CD4-positive, alpha-beta memory T cell (primary cell): ENCODE measurements at regions of chr10 and their contacts with region 1.

Region 1: DNA sequence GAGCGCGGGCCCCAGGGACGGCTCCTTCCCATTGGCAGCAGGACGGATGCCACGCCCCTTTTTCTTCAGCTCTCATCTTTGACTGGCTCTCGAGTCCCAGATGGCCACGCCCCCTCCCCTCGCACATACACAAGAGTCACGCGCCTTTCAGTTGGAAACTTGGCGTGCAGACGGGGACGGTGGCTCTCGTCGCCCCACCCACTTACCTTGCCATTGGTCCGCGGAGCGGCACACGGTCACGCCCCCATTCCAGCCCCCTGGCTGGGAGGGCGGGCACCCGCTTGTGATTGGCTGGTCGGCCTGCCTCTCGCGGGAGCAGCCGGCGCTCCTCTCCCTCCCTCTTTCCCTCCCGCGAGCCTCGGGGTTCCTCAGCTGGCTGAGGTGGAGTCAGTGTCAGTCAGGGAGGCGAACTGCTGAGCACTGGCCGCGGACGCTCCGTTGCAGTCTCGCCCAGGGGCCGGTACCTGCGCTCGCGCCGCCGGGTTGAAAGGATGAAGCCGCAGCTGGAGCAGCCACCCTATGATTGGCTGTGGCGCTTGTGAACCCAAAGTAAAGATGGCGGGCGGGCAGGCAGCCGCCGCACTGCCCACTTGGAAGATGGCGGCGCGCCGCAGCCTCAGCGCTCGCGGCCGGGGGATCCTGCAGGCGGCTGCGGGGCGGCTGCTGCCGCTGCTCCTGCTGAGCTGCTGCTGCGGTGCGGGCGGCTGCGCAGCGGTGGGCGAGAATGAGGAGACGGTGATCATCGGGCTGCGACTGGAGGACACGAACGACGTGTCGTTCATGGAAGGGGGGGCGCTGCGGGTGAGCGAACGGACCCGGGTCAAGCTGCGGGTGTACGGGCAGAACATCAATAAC is at the start of gene CNNM2:
- DNase-seq: peak; percentile 100
- H3K4me3 ChIP-seq: peak within 1 kb of the TSS; percentile 84 to 91
- H3K4me3 Mint-ChIP-seq: peak within 1 kb of the TSS; percentile 94 to 96 (median 95)
- H3K27ac ChIP-seq: peak within 1 kb of the TSS; percentile 72
- H3K27ac Mint-ChIP-seq: peak within 1 kb of the TSS; percentile 92 to 98 (median 96)
- H3K4me1 ChIP-seq: peaks cover 53% of the 10 kb centered on the region
- H3K4me1 Mint-ChIP-seq: peaks cover 35 to 59% (median 51%) of the 10 kb centered on the region in 4 donors
- H3K27me3 ChIP-seq: no peaks in the 10 kb centered on the region
- H3K27me3 Mint-ChIP-seq: peaks cover 4 to 6% of the 10 kb centered on the region in 2 donors
- total RNA-seq, gene CNNM2: 11.9 to 14.4 TPM

Region 2: DNA sequence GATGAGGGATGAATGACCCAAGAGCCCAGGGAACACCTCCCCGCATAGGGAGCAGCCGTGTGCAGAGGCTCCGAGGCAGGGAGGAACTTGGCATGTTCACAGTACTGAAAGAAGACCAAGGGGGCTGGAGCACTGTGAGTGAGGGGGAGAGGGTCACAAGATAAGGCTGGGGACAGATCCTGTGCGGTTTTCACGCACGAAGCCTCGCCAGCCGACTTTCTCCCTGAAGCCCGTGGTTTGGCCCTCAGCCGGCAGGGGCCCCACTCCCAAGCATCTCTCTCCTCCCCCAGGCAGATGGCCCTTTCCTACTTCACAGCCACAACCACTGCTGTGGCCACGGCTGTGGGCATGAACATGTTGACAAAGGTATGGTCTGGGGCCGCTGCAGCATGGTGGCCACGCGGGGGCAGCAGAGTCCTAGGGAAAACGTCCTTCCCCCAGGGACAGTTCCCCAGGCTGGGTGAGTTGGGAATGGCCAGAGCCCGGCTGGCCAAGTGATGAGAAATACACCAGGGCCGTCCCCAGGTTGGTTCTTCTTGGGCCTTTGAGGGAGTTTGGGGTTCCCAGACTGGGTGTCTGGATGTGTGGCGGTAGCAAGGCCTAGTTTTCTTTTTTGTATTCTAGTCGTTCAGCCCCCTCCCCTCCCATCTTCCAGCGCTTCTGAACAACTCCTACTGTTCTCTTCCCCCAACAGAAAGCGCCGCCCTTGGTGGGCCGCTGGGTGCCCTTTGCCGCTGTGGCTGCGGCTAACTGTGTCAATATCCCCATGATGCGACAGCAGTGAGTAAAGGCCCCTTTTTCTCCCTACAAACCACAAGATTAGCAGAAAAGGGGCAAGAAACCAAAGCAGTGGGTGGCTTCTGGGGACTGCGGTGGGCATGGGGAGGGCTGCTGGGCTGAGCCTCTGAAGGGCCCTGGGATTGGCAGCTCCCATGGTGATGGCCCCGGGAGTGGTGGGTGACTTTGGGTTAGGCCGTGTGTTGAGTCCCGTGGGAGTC is 188.9 kb before region 1 on chr10:
- CTCF ChIA-PET with region 1: no interaction called
- POLR2A ChIA-PET with region 1: no interaction called
- intact Hi-C with region 1: loop called (anchors 2 kb)
- DNase-seq: peak in 2 of 5 donors; percentile 16 to 26
- H3K4me3 ChIP-seq: no peak overlapping the region
- H3K4me3 Mint-ChIP-seq: no peak overlapping the region
- H3K27ac ChIP-seq: no peak overlapping the region
- H3K27ac Mint-ChIP-seq: peak overlapping the region in 1 of 7 donors; percentile 15
- H3K4me1 ChIP-seq: no peaks in the 10 kb centered on the region
- H3K4me1 Mint-ChIP-seq: peaks cover 0 to 4% (median 4%) of the 10 kb centered on the region in 4 donors
- H3K27me3 ChIP-seq: no peaks in the 10 kb centered on the region
- H3K27me3 Mint-ChIP-seq: no peaks in the 10 kb centered on the region

Region 3: GRCh38 chr10:102853944-102854694 is 64.1 kb before region 1 on chr10 and contains the start of gene BORCS7:
- CTCF ChIA-PET with region 1: interaction called, 3 read pairs
- POLR2A ChIA-PET with region 1: interaction called, 10 read pairs
- intact Hi-C with region 1: loop called (anchors 1 kb)
- DNase-seq: peak; percentile 87 to 93 (median 89)
- H3K4me3 ChIP-seq: peak within 1 kb of the TSS; percentile 63 to 91
- H3K4me3 Mint-ChIP-seq: peak within 1 kb of the TSS; percentile 77 to 99 (median 94)
- H3K27ac ChIP-seq: peak within 1 kb of the TSS; percentile 89
- H3K27ac Mint-ChIP-seq: peak within 1 kb of the TSS; percentile 92 to 100 (median 99)
- H3K4me1 ChIP-seq: peaks cover 4% of the 10 kb centered on the region
- H3K4me1 Mint-ChIP-seq: peaks cover 8 to 24% (median 14%) of the 10 kb centered on the region in 4 donors
- H3K27me3 ChIP-seq: no peaks in the 10 kb centered on the region
- H3K27me3 Mint-ChIP-seq: no peaks in the 10 kb centered on the region
- total RNA-seq, gene BORCS7: 14.7 to 17.7 TPM

Region 4: GRCh38 chr10:103192451-103193106 is 274.4 kb after region 1 on chr10:
- CTCF ChIA-PET with region 1: interaction called, 3 read pairs
- POLR2A ChIA-PET with region 1: interaction called, 14 read pairs
- intact Hi-C with region 1: loop called (anchors 1 kb)
- DNase-seq: peak; percentile 48 to 68 (median 56)
- H3K4me3 ChIP-seq: peak overlapping the region; percentile 80 to 81
- H3K4me3 Mint-ChIP-seq: peak overlapping the region; percentile 94 to 99 (median 98)
- H3K27ac ChIP-seq: peak overlapping the region; percentile 76
- H3K27ac Mint-ChIP-seq: peak overlapping the region; percentile 94 to 98 (median 97)
- H3K4me1 ChIP-seq: peaks cover 45% of the 10 kb centered on the region
- H3K4me1 Mint-ChIP-seq: peaks cover 29 to 56% (median 41%) of the 10 kb centered on the region in 4 donors
- H3K27me3 ChIP-seq: no peaks in the 10 kb centered on the region
- H3K27me3 Mint-ChIP-seq: no peaks in the 10 kb centered on the region

Region 5: GRCh38 chr10:103367782-103368518 is 449.8 kb after region 1 on chr10 and contains the start of gene TAF5:
- CTCF ChIA-PET with region 1: no interaction called
- POLR2A ChIA-PET with region 1: interaction called, 3 read pairs
- intact Hi-C with region 1: loop called (anchors 1 kb)
- DNase-seq: peak; percentile 91 to 93 (median 91)
- H3K4me3 ChIP-seq: peak within 1 kb of the TSS; percentile 52 to 89
- H3K4me3 Mint-ChIP-seq: peak within 1 kb of the TSS; percentile 92 to 98 (median 96)
- H3K27ac ChIP-seq: peak within 1 kb of the TSS; percentile 79
- H3K27ac Mint-ChIP-seq: peak within 1 kb of the TSS; percentile 74 to 98 (median 95)
- H3K4me1 ChIP-seq: peaks cover 22% of the 10 kb centered on the region
- H3K4me1 Mint-ChIP-seq: peaks cover 11 to 25% (median 16%) of the 10 kb centered on the region in 4 donors
- H3K27me3 ChIP-seq: no peaks in the 10 kb centered on the region
- H3K27me3 Mint-ChIP-seq: no peaks in the 10 kb centered on the region
- total RNA-seq, gene TAF5: 7.5 to 7.9 TPM